ENCODE measurements at regions of chr6 and their contacts with region 1.

Region 1: GRCh38 chr6:111057074-111057752 is 30.1 kb upstream of the SLC16A10 start:
- DNase-seq: peak in 2 of 5 donors; percentile 9 to 50
- H3K4me3 ChIP-seq: no peak overlapping the region
- H3K4me3 Mint-ChIP-seq: no peak overlapping the region
- H3K27ac ChIP-seq: no peak overlapping the region
- H3K27ac Mint-ChIP-seq: peak overlapping the region in 2 of 8 donors; percentile 4 to 49
- H3K4me1 ChIP-seq: no peaks in the 10 kb centered on the region
- H3K4me1 Mint-ChIP-seq: peaks cover 2 to 5% (median 4%) of the 10 kb centered on the region in 3 donors
- H3K27me3 ChIP-seq: no peaks in the 10 kb centered on the region
- H3K27me3 Mint-ChIP-seq: peaks cover 3 to 12% of the 10 kb centered on the region in 2 donors

Region 2: DNA sequence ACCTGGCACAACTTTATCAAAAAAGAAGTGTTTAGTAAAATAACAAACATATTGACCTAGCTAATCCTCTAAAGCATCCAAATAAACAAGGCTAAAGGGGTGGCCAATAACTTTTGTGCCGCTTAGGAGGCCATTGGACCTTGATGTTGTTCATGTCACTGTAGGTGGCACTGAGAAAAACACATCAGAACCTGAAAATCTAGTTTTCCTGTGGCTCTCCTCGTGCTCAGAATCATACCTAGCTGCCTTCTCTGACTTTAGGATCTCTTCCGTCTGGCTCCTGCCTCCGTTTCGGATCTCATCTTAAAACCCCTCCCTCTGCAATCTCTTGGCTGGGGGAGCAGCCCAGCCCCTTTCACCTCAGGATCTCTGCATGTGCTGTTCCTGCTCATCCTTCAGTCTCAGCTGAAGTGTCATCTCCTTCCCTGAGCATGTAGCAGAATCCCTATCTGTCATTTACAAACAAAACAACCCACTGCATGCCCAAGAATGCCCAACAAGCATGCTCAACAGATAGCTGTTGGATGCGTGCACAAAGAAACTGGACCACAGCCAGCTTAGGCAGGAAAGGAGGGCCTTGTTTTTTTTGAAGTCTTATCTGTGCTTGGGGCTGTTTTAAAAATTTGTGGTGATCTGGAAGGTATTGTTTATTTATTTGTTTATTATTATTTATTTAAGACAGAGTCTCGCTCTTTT is 11.4 kb after region 1 on chr6:
- CTCF ChIA-PET with region 1: interaction called, 12 read pairs
- POLR2A ChIA-PET with region 1: no interaction called
- DNase-seq: no peak
- H3K4me3 ChIP-seq: no peak overlapping the region
- H3K4me3 Mint-ChIP-seq: no peak overlapping the region
- H3K27ac ChIP-seq: no peak overlapping the region
- H3K27ac Mint-ChIP-seq: peak overlapping the region in 1 of 8 donors; percentile 19
- H3K4me1 ChIP-seq: no peaks in the 10 kb centered on the region
- H3K4me1 Mint-ChIP-seq: no peaks in the 10 kb centered on the region
- H3K27me3 ChIP-seq: no peaks in the 10 kb centered on the region
- H3K27me3 Mint-ChIP-seq: peaks cover 26 to 44% of the 10 kb centered on the region in 2 donors

Region 3: DNA sequence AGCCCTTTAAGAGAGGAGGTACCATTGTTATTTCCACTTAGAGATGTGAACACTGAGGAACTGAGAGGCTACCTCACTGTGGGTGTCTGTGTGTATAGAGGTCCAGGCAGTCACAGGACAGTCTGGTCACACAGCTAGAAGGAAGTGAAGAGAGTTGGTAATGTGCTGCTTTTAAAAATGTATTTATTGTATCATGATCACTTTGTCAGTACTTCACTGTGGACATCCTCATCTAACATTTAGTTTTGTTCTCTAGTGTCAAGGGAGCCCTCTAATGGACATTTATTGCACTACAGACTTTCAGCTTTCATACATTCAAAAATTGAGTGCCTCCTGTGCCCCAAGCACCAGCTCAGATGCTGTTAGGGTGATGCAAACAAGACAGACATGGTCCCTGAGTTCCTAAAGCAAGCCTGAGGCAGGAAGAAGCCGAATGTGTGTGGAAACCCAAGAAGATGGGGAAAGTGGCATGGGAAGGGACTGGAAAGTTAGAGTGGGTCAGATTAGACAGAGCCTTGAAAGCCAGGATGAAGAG is 153.0 kb after region 1 on chr6:
- CTCF ChIA-PET with region 1: interaction called, 19 read pairs
- POLR2A ChIA-PET with region 1: no interaction called
- DNase-seq: peak in 2 of 5 donors; percentile 36 to 57
- H3K4me3 ChIP-seq: no peak overlapping the region
- H3K4me3 Mint-ChIP-seq: no peak overlapping the region
- H3K27ac ChIP-seq: no peak overlapping the region
- H3K27ac Mint-ChIP-seq: no peak overlapping the region
- H3K4me1 ChIP-seq: no peaks in the 10 kb centered on the region
- H3K4me1 Mint-ChIP-seq: no peaks in the 10 kb centered on the region
- H3K27me3 ChIP-seq: no peaks in the 10 kb centered on the region
- H3K27me3 Mint-ChIP-seq: peaks cover 0 to 2% of the 10 kb centered on the region in 2 donors

Measured in CD8-positive, alpha-beta memory T cell (primary cell).